Dendritic cell treated with granulocyte-macrophage colony-stimulating factor and Interleukin-4, amounts not matched to agents 40 ng/mL and 50 ng/mL, for 4 days (primary cell): ENCODE measurements at regions of chr12 and their contacts with region 1.

Region 1: GRCh38 chr12:8078398-8078797 is 3.7 kb upstream of the NECAP1 start:
- H3K4me3 Mint-ChIP-seq: no peak overlapping the region
- H3K27ac Mint-ChIP-seq: no peak overlapping the region
- H3K4me1 Mint-ChIP-seq: peaks cover 45% of the 10 kb centered on the region
- H3K27me3 Mint-ChIP-seq: no peaks in the 10 kb centered on the region

Region 2: GRCh38 chr12:7970475-7971252 is 107.7 kb before region 1 on chr12:
- intact Hi-C with region 1: no loop called
- H3K4me3 Mint-ChIP-seq: peak overlapping the region; percentile 92
- H3K27ac Mint-ChIP-seq: peak overlapping the region; percentile 79
- H3K4me1 Mint-ChIP-seq: peaks cover 43% of the 10 kb centered on the region
- H3K27me3 Mint-ChIP-seq: no peaks in the 10 kb centered on the region

Region 3: DNA sequence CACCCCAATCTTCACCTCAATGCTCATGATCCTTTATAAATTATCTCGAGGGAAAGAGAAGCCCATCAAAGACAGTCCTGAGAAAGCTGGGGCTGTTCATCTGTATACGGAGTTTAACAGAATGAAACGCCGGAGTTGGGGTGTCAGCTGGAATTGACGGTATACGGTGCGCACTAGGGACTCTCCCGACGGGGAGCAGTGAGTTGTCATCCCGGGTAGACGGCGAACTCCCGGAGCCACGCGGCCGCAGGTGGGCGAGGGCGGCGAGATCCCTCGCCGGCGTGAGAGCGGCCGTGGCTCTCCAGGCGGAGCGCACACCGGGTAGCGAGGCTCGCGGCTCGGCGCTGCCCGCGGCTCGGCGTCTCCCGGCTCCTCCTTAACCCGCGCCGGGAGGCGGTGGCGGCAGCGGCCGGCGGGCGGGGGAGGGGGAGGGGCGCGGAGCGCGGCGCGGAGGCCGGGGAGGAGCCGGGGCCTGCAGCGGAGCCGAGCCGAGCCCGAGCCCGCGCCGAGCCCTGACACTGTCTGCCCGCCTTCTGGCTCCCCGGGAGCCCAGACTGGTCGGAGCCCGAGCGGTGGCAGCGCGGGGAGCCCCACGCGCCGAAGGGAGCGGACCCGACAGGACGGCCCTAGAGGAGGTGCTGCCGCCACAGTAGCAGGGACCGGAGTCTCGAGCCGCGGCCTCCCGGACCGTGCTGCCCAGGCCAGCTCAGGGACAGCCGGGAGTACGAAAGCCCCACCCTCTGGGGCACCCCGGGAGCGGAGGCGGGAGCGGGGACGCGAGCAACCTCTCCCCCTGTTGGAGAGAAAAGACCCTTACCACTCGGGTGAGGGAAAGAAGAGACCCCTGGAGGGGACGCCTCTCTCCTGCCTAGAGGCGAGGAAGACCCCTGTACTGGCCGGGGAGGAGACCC is 45.9 kb before region 1 on chr12 and contains the start of gene FOXJ2:
- intact Hi-C with region 1: loop called (anchors 5 kb)
- H3K4me3 Mint-ChIP-seq: peak within 1 kb of the TSS; percentile 87
- H3K27ac Mint-ChIP-seq: peak within 1 kb of the TSS; percentile 90
- H3K4me1 Mint-ChIP-seq: peaks cover 49% of the 10 kb centered on the region
- H3K27me3 Mint-ChIP-seq: no peaks in the 10 kb centered on the region

Region 4: GRCh38 chr12:8045952-8046944 is 32.1 kb before region 1 on chr12:
- intact Hi-C with region 1: loop called (anchors 1 kb)
- H3K4me3 Mint-ChIP-seq: no peak overlapping the region
- H3K27ac Mint-ChIP-seq: no peak overlapping the region
- H3K4me1 Mint-ChIP-seq: peaks cover 38% of the 10 kb centered on the region
- H3K27me3 Mint-ChIP-seq: no peaks in the 10 kb centered on the region

Region 5: DNA sequence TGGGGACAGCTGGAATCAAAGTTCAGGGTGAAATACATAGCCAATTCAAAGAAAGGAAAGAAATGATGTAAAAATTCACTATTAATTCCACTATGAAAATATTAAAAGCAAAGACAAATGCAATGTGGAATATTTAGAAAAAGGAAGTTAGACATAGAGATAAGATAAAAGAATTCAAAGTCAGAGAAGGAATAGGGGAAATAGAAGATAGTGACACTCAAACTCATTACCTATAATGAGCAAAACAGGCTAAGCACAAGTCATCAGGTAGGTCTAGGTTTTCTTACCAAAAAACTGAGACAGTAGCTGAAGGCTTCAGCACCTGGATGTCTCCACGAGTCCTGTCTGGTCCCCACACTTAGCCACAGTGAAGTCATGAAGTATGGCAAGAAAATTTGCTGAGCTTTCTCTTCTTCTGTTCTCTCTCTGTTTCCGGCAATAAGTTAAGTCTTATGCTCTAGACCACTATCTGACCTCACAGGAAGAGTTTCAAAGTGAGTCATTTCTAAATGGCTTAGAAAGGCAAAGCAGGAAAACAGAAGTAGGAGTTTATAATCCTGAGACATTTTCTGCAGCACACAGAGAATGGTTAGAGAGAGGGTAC is 12.3 kb before region 1 on chr12 and contains the start of gene C3AR1:
- intact Hi-C with region 1: loop called (anchors 1 kb)
- H3K4me3 Mint-ChIP-seq: peak within 1 kb of the TSS; percentile 83
- H3K27ac Mint-ChIP-seq: peak within 1 kb of the TSS; percentile 96
- H3K4me1 Mint-ChIP-seq: peaks cover 80% of the 10 kb centered on the region
- H3K27me3 Mint-ChIP-seq: no peaks in the 10 kb centered on the region

Region 6: DNA sequence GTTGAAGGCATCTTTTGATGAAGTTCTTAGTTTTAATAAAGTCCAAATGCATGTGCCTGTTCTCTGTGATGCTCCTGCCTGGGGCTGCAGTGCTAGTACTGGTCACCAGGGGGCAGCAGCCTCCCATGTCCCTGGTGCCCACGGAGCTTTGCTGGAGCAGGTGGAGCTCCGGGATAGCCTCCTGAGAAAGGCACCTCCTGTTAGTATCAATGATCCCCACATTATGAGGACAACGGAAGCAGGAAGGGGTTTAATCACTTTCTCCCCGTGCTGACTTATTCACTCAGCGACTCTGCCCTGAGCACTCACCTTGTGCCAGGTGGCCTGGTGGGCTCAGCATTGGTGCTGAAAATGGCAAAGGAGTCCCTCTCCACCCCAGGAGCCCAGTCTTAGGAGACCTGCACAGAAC is 1252.8 kb after region 1 on chr12:
- intact Hi-C with region 1: no loop called
- H3K4me3 Mint-ChIP-seq: no peak overlapping the region
- H3K27ac Mint-ChIP-seq: no peak overlapping the region
- H3K4me1 Mint-ChIP-seq: peaks cover 28% of the 10 kb centered on the region
- H3K27me3 Mint-ChIP-seq: peaks cover 1% of the 10 kb centered on the region